Activated naive CD4-positive, alpha-beta T cell treated with anti-CD3 and anti-CD28 coated beads for 36 hours (primary cell): ENCODE measurements at regions of chr1 and their contacts with region 1.

Region 1: GRCh38 chr1:201895913-201896807 is 7.5 kb downstream of the SHISA4 start:
- DNase-seq: peak; percentile 94
- H3K4me3 Mint-ChIP-seq: peak overlapping the region; percentile 50
- H3K27ac Mint-ChIP-seq: peak overlapping the region; percentile 33
- H3K4me1 Mint-ChIP-seq: peaks cover 5% of the 10 kb centered on the region
- H3K27me3 Mint-ChIP-seq: peaks cover 15% of the 10 kb centered on the region

Region 2: GRCh38 chr1:201702936-201703335 is 193.2 kb before region 1 on chr1:
- CTCF ChIA-PET with region 1: no interaction called
- intact Hi-C with region 1: no loop called
- DNase-seq: no peak
- H3K4me3 Mint-ChIP-seq: no peak overlapping the region
- H3K27ac Mint-ChIP-seq: no peak overlapping the region
- H3K4me1 Mint-ChIP-seq: no peaks in the 10 kb centered on the region
- H3K27me3 Mint-ChIP-seq: no peaks in the 10 kb centered on the region

Region 3: DNA sequence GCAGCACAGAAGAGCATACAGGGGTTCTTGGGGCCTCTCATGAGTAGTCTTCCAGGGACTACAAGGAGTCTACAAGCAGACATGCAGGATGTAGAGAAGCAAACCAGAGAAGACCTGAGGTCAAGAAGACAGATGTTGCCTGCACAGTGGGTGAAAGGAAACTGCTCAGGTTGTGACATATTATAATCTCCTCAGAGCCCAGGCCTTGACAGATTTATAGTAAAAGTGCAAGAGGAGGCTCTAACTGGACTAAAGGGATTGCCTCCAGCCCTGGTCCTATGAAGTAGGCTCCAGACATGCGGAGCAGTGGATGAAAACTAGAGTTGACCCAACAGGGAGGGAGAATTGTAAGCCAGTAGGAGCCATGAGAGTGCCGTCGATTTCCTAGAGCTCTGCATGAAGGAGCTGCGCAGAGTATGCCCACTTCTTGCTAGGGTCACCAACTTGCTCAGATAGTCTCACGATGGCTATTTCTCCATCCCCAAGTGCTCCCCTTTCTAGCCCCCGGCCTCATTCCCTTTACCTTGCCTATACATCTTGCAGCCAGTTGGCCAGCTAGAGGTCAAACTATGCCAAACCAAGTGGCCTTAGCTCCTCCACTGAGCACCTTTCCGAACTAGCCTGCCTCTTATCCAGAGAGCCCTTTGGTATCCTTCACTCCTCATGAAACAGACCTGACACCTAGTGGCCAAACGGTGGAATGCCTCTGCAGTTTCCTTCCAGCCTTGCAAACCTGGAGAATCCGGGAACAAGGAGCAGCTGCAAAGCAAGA is 103.4 kb before region 1 on chr1:
- CTCF ChIA-PET with region 1: no interaction called
- intact Hi-C with region 1: no loop called
- DNase-seq: peak; percentile 74
- H3K4me3 Mint-ChIP-seq: no peak overlapping the region
- H3K27ac Mint-ChIP-seq: no peak overlapping the region
- H3K4me1 Mint-ChIP-seq: no peaks in the 10 kb centered on the region
- H3K27me3 Mint-ChIP-seq: no peaks in the 10 kb centered on the region

Region 4: GRCh38 chr1:201870397-201870796 is 25.8 kb before region 1 on chr1:
- CTCF ChIA-PET with region 1: interaction called, 10 read pairs
- intact Hi-C with region 1: no loop called
- DNase-seq: no peak
- H3K4me3 Mint-ChIP-seq: no peak overlapping the region
- H3K27ac Mint-ChIP-seq: no peak overlapping the region
- H3K4me1 Mint-ChIP-seq: no peaks in the 10 kb centered on the region
- H3K27me3 Mint-ChIP-seq: no peaks in the 10 kb centered on the region

Region 5: DNA sequence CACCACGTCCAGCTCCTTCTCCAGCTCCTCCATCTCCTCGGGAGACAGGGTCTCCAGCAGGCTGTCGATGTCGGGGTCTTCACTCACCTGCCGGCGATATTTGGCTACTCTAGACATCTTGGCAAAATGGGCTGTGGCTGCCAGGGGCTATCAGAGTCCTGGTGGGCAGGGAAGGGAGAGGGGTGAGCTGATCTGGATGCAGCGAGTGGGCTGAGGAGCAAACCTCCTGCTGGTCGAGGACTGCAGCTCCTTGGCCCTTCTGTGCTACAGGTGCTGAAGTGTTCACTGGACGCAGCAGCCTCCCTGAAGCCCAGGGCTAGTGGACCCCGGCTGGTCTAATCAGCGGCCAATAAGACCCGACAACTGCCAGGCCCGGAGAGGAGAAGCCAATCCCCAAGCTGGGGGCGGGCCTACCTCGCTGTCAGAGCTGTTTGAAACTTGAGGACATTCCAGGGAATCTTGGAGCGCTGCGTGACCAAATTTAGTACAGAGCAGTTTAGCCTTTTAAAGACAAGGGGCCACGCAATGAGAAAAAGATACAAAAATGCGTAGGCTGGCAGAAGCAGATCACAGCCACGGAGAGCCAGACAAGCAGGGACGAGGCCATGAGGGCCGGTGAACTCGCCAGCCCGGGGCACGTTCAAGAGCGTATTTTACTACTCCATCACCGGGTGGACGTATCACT is 50.2 kb after region 1 on chr1 and contains the start of gene LMOD1:
- CTCF ChIA-PET with region 1: interaction called, 33 read pairs
- intact Hi-C with region 1: no loop called
- DNase-seq: peak; percentile 14
- H3K4me3 Mint-ChIP-seq: peak within 1 kb of the TSS; percentile 40
- H3K27ac Mint-ChIP-seq: no peak within 1 kb of the TSS
- H3K4me1 Mint-ChIP-seq: peaks cover 15% of the 10 kb centered on the region
- H3K27me3 Mint-ChIP-seq: peaks cover 39% of the 10 kb centered on the region
- total RNA-seq, gene LMOD1: not detected

Region 6: GRCh38 chr1:201970334-201971159 is 74.4 kb after region 1 on chr1:
- CTCF ChIA-PET with region 1: interaction called, 123 read pairs
- intact Hi-C with region 1: loop called (anchors 1 kb)
- DNase-seq: no peak
- H3K4me3 Mint-ChIP-seq: no peak overlapping the region
- H3K27ac Mint-ChIP-seq: no peak overlapping the region
- H3K4me1 Mint-ChIP-seq: no peaks in the 10 kb centered on the region
- H3K27me3 Mint-ChIP-seq: no peaks in the 10 kb centered on the region

Region 7: DNA sequence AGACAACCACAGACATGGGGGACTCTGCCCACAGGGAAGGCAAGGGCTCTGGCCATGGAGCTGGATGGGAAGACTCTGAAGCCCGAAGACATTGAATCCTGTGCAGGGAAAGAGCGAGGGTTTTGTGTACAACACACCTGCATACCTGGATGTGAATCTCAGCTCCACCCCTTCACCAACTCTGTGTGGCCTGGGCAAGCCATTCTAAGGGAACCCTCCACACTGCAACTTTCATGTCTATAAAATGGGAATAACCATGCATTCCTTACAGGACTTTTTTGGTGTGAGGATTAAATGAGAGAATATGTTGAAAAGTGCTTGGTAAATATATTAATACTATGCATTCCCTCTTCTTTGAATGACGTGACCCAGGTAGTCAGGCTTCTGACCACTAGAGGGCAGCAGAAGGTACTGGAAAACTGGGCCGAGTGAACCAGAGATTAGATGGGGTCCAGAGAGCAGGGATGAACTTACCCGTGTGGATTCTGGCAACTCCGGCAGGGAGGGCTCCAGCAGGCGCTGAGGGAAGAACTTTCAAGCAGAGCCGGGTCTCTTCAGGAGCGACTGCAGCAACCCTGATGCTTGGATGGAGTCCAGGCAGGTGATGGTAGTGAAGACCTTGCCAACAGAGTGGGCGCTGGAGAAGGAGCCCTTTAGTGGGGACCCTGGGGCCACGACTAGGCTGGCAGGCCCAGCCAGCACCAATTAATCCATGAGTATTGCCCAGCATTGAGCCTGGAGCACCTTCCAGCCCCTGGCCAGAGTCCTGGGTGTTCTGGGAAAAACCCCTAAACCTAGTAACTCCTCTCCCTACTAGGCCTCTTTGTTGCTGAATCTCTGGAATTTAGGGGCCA is 113.4 kb after region 1 on chr1:
- CTCF ChIA-PET with region 1: interaction called, 14 read pairs
- intact Hi-C with region 1: no loop called
- DNase-seq: peak; percentile 80
- H3K4me3 Mint-ChIP-seq: no peak overlapping the region
- H3K27ac Mint-ChIP-seq: no peak overlapping the region
- H3K4me1 Mint-ChIP-seq: no peaks in the 10 kb centered on the region
- H3K27me3 Mint-ChIP-seq: no peaks in the 10 kb centered on the region